ENCODE measurements at regions of chr14 and their contacts with region 1.

Region 1: GRCh38 chr14:24064091-24064749 is 7.1 kb upstream of the CPNE6 start:
- DNase-seq: no peak
- ATAC-seq: no peak
- H3K4me3 ChIP-seq: no peak overlapping the region
- H3K27ac ChIP-seq: no peak overlapping the region
- H3K4me1 ChIP-seq: no peaks in the 10 kb centered on the region
- H3K27me3 ChIP-seq: no peaks in the 10 kb centered on the region
- CTCF ChIP-seq: no peak

Region 2: GRCh38 chr14:24100197-24100981 is 36.2 kb after region 1 on chr14:
- intact Hi-C with region 1: loop called in 2 of 10 experiments (anchors 5 kb)
- DNase-seq: no peak
- ATAC-seq: no peak
- H3K4me3 ChIP-seq: no peak overlapping the region
- H3K27ac ChIP-seq: no peak overlapping the region
- H3K4me1 ChIP-seq: peaks cover 0 to 5% (median 1%) of the 10 kb centered on the region in 9 donors
- H3K27me3 ChIP-seq: no peaks in the 10 kb centered on the region
- CTCF ChIP-seq: no peak

Region 3: DNA sequence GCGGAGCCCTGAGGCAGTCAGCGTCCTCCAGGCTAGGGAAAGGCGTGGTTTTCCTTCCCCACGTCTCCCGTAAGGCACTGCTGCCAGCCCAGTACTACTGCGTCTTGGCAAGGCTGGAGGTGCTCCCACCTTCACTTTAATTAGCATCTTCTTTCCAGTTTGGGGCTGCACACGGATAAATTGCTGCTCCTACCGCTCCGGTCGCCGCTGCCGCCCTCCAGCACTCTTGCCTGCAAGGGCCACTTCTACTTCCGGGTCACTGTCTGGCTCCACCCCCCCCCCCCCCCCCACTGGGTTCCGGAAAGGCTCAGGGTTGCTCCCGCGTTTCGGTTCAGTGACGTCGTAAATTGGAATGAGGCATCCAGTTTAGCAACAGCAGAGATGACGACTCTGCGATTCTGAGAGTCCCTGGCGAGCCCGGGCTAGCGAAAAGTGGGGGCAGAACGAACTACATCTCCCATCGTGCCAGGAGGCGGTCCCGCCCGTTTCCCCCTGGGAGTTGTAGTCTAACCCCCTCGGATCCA is 168.0 kb after region 1 on chr14 and contains the start of gene NEDD8:
- intact Hi-C with region 1: no loop called
- DNase-seq: peak; percentile 90 to 94
- ATAC-seq: peak; percentile 89 to 96 (median 91)
- H3K4me3 ChIP-seq: peak within 1 kb of the TSS; percentile 65 to 97 (median 91)
- H3K27ac ChIP-seq: peak within 1 kb of the TSS; percentile 74 to 97 (median 90)
- H3K4me1 ChIP-seq: peaks cover 18 to 47% (median 34%) of the 10 kb centered on the region in 9 donors
- H3K27me3 ChIP-seq: no peaks in the 10 kb centered on the region
- CTCF ChIP-seq: no peak
- total RNA-seq, gene NEDD8: 178 to 228 (median 199) TPM

Region 4: DNA sequence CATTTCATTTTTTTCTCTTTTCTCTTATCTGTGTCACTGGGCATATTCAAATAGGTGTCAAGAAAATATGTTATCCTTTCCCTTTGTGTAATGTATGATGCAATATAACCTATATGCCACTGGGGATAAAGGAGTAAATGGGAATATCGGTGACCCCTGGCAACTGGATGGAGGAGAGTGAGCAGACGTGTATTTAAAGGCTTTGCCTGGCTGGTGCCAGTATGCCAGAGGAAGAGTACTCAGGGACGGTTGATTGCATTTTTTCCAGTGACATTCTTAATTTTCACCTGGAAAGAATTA is 997.8 kb after region 1 on chr14:
- intact Hi-C with region 1: no loop called
- DNase-seq: no peak
- ATAC-seq: no peak
- H3K4me3 ChIP-seq: no peak overlapping the region
- H3K27ac ChIP-seq: no peak overlapping the region
- H3K4me1 ChIP-seq: no peaks in the 10 kb centered on the region
- H3K27me3 ChIP-seq: peaks cover 0 to 7% (median 0%) of the 10 kb centered on the region in 7 donors
- CTCF ChIP-seq: no peak